GM13977 (cell line): ENCODE measurements at regions of chr20 and their contacts with region 1.

Region 1: DNA sequence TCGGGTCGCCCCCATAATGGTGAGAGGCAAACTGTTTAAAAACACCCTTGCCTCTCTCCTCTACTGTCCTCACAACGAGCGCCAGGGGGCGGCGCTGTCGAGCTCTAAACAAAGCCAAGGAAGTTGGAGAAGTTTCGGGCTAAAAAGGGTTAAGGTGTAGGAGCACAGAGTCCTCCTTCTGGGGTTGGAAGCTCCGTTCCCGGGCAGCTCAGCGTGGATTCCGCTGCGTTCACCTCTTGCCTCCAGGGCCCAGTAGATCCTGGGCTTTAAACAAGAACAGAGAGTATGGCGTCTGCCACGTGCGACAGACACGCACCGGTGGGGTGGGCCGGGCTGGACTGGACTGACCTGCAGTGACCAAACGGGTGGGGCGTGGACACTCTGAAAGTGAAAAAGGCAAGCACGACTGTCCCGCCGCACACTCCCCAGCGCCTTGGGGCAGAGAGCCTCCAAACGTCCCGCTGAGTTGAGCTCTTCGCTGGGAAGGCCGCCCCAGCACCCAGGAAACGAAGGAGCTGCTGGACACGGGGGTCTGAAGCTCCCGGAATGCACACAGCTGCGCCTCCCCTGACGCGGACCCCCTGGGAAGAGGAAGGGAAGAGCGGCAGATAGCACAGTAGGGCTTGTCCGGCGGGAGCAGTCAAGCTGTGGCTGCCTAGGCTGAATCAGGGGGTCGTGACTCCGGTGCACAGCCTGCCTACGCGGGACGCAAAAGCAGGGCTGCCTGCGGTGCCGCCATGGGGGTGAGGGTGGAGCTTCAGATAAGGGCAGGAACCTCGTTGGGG is 1.6 kb upstream of the THBD start:
- DNase-seq: peak; percentile 55
- CTCF ChIP-seq: peak; percentile 69

Region 2: GRCh38 chr20:22779878-22780277 is 271.2 kb before region 1 on chr20:
- in situ Hi-C with region 1: no loop called
- DNase-seq: no peak
- CTCF ChIP-seq: no peak

Region 3: DNA sequence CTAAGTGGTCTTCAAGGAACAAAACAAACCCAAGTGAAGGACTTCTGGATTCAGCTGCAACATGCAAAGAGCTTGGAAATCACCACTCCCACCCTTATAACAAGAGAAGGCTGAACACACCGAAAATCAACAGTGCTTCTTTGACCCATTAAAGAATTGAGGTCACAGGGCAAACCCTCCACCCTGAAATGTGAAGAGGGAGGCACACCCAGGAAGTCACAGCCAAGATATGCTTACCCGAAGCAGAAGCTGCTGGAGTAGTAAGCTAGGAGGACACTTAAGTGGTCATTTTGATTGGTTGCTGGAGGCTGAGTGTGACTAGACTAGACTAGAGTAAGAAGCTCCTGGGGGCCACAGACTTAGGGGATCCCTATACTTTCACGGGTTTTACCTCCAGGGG is 204.2 kb before region 1 on chr20:
- in situ Hi-C with region 1: no loop called
- DNase-seq: no peak
- CTCF ChIP-seq: no peak

Region 4: DNA sequence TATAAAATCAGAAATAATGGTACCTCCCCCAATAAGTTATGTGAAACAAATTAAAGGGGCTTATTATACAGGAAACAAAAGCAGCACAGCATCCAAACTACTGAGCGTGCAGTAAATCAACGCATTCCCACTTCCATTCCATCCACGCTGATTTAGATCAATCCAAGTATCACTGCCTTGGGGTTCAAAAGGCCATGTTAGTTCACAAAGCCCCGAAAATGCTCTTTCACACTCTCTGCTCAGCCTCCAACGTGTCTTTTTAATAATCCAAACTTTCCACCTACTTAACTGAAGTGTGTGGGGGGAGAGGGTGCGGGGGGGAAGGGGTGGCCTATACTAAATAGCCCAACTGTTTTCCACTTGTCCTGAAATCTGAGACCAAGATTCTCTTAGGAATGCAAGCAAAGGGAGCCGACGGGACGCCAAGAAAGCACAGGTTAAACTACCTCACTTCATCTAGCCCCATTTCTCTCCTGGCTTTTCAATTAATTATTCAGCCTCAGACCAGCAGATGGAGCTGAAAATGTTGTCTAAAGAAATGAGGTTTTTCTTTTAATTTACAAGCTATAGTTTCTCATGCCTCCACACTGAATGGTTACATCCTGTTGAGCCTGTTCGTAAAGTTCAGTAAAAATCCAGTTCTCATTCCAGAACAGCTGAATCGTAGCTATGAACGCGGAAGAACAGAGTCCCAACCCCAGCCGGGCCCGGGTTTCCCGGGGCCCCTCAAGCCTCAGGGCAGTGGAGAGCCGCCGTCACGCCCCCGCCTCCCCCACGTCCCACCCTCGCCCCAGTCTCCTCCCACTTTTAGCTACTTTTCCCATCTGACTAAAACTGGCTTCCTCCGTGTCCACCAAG is 298.5 kb after region 1 on chr20:
- in situ Hi-C with region 1: loop called (anchors 25 kb)
- DNase-seq: peak; percentile 76
- CTCF ChIP-seq: peak; percentile 42